Activated CD4-positive, alpha-beta memory T cell treated with anti-CD3 and anti-CD28 coated beads for 36 hours (primary cell): ENCODE measurements at regions of chr1 and their contacts with region 1.

Region 1: GRCh38 chr1:246931549-246932365 is at the start of gene AHCTF1:
- DNase-seq: peak; percentile 96
- H3K4me3 Mint-ChIP-seq: peak within 1 kb of the TSS; percentile 96
- H3K27ac Mint-ChIP-seq: peak within 1 kb of the TSS; percentile 96
- H3K4me1 Mint-ChIP-seq: peaks cover 30% of the 10 kb centered on the region
- H3K27me3 Mint-ChIP-seq: no peaks in the 10 kb centered on the region
- total RNA-seq, gene AHCTF1: 35.8 to 40.3 TPM

Region 2: GRCh38 chr1:246893191-246893939 is 38.4 kb before region 1 on chr1:
- CTCF ChIA-PET with region 1: no interaction called
- POLR2A ChIA-PET with region 1: no interaction called
- intact Hi-C with region 1: loop called (anchors 5 kb)
- DNase-seq: no peak
- H3K4me3 Mint-ChIP-seq: no peak overlapping the region
- H3K27ac Mint-ChIP-seq: peak overlapping the region; percentile 67
- H3K4me1 Mint-ChIP-seq: peaks cover 8% of the 10 kb centered on the region
- H3K27me3 Mint-ChIP-seq: no peaks in the 10 kb centered on the region

Region 3: DNA sequence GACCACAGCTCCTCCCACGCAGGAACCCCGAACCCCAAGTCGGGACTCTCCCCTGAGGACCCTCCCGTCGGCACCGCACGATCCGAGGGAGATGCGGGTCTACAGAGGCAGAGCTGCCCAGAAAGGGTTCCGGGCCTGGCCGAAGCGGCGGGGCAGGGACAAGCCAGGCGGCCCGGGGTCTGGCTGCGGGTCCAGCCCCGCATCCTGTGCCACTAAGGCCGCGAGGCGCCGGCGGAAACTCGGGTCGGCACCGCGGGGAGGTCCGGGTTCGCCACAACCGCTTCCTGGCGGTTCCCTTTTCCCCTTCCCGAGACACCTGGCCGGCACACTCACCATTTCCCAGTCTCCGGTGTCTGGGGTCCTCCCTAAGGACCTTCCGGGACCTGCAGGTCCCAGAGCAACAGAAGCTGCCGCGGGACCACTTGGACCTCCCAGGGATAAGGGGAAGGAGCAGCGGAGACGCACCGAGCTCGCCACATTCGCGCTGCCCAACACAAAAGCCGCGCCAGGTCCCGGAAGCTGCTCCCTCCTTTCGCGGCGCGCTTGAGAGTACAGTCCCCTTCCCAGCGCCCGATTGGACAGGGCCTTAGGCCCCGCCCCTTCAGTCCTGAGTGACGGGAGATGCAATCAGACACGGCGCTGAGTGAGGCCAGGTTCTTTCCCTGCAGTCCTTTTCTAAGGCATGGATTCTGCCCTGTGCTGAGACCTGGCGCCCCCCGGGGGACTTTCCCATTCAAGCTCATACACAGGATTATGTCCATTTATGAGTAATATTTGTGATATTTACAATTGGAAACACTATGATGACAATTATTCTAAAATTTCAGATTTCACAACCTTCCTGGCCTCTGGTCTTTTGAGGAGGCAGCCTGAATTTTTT is 146.7 kb after region 1 on chr1 and contains the start of gene ZNF670:
- CTCF ChIA-PET with region 1: interaction called, 3 read pairs
- POLR2A ChIA-PET with region 1: interaction called, 3 read pairs
- intact Hi-C with region 1: loop called (anchors 1 kb)
- DNase-seq: peak; percentile 96
- H3K4me3 Mint-ChIP-seq: peak within 1 kb of the TSS; percentile 90
- H3K27ac Mint-ChIP-seq: peak within 1 kb of the TSS; percentile 85
- H3K4me1 Mint-ChIP-seq: peaks cover 24% of the 10 kb centered on the region
- H3K27me3 Mint-ChIP-seq: peaks cover 3% of the 10 kb centered on the region
- total RNA-seq, gene ZNF670: 3.9 to 4.5 TPM

Region 4: DNA sequence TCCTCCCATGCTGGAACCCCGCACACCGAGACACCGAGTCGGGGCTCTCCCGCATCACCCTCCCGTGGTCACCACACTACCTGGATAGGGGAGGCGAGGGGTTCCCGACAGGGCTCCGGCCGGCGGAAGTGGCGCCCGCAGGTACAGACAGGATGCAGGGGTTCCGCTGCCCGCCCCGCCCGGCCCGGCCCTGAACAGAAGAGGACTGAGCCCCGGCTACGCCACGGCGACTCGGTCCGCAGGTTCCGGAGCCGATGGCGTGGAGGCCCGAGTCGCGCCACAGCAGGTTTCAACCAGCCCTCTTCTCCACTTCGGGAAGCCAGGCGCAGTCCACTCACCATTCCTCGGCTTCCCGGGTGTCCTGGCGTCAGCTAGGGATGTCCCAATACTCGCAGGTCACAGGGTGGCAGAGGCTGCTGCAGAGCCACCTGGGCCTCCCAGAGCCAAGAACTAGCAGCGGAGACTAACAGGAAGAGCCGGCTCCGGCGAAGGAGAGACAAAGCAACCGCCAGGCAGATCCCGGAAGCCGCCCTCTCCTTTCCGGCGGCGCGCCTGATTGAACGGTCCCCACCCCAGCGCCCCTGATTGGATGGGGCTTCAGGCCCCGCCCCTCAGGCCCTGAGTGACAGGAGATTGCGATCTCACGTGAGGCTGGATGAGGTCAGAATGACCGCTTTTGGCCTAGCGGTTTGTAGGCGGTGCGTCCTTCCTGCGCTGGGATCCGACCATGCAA is 172.3 kb after region 1 on chr1 and contains the start of gene ZNF669:
- CTCF ChIA-PET with region 1: no interaction called
- POLR2A ChIA-PET with region 1: no interaction called
- intact Hi-C with region 1: loop called (anchors 1 kb)
- DNase-seq: peak; percentile 96
- H3K4me3 Mint-ChIP-seq: peak within 1 kb of the TSS; percentile 87
- H3K27ac Mint-ChIP-seq: peak within 1 kb of the TSS; percentile 88
- H3K4me1 Mint-ChIP-seq: peaks cover 16% of the 10 kb centered on the region
- H3K27me3 Mint-ChIP-seq: peaks cover 24% of the 10 kb centered on the region
- total RNA-seq, gene ZNF669: 7.9 to 8.4 TPM

Region 5: DNA sequence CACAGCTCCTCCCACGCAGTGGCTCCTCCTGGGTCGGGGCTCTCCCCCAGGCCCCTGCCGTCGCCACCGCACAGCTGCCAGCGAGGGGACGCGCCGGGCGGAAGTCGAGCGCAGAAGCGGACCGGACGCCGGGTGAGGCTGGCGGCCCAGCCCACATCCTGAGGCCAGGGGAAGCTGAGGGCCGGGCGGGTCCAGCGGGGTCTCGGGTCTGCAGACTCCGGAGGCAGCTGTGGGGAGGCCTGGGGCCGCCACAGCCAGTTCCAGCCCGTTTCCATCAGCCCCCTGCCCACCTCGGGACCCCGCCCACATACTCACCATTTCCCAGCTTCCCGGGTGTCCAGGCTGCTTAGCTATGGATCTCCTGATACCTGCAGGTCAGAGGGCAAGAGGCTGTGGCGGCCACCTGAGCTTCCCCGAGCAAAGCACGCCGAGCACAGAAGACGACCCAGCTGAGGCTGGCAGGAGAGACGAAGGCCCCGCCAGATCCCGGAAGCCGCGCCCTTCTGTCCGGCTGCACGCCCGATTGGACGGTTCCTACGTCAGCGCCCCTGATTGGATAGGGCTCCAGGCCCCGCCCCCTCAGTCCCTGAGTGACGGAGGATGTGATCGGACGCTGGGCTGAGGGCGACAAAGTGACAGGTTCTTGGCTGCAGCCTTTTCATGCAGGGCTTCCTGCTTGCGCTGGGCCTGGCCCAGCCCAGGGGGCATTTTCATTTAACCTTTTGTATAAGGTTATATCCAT is 278.8 kb after region 1 on chr1:
- CTCF ChIA-PET with region 1: no interaction called
- POLR2A ChIA-PET with region 1: interaction called, 4 read pairs
- intact Hi-C with region 1: loop called (anchors 1 kb)
- DNase-seq: peak; percentile 98
- H3K4me3 Mint-ChIP-seq: peak overlapping the region; percentile 90
- H3K27ac Mint-ChIP-seq: peak overlapping the region; percentile 96
- H3K4me1 Mint-ChIP-seq: peaks cover 62% of the 10 kb centered on the region
- H3K27me3 Mint-ChIP-seq: no peaks in the 10 kb centered on the region

Region 6: GRCh38 chr1:247331172-247331991 is 399.6 kb after region 1 on chr1 and contains the start of gene ZNF496:
- CTCF ChIA-PET with region 1: no interaction called
- POLR2A ChIA-PET with region 1: interaction called, 3 read pairs
- intact Hi-C with region 1: loop called (anchors 1 kb)
- DNase-seq: peak; percentile 85
- H3K4me3 Mint-ChIP-seq: peak within 1 kb of the TSS; percentile 83
- H3K27ac Mint-ChIP-seq: peak within 1 kb of the TSS; percentile 66
- H3K4me1 Mint-ChIP-seq: peaks cover 13% of the 10 kb centered on the region
- H3K27me3 Mint-ChIP-seq: no peaks in the 10 kb centered on the region
- total RNA-seq, gene ZNF496: 10.6 to 12.0 TPM

Region 7: DNA sequence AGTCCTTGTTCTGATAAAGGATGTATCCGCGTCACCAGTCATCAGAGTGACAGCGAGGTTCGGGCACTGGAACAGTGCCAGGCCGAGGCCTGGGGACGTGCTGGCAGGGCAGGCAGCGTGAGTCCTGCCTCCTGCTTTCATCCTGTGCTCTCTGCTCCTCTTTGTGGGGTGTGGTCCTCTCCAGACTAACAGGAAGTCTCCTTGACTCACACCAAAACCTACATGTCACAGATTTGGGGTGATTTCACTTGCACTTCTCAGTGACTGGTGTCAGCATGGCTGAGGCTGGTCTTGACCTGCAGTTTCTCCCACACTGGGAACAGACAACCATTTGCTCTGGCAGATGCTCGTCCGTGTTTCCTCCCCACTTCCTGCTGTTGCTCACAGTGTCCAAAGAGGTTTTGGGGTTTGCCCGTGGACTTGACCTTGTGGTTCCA is 475.4 kb after region 1 on chr1:
- CTCF ChIA-PET with region 1: no interaction called
- POLR2A ChIA-PET with region 1: no interaction called
- intact Hi-C with region 1: loop called (anchors 5 kb)
- DNase-seq: peak; percentile 82
- H3K4me3 Mint-ChIP-seq: peak overlapping the region; percentile 45
- H3K27ac Mint-ChIP-seq: peak overlapping the region; percentile 63
- H3K4me1 Mint-ChIP-seq: peaks cover 43% of the 10 kb centered on the region
- H3K27me3 Mint-ChIP-seq: peaks cover 6% of the 10 kb centered on the region